Activated CD4-positive, alpha-beta T cell treated with anti-CD3 and anti-CD28 coated beads for 36 hours (primary cell): ENCODE measurements at regions of chr12 and their contacts with region 1.

Region 1: GRCh38 chr12:9634177-9634803 is 26.6 kb upstream of the KLRB1 start:
- DNase-seq: peak; percentile 88
- ATAC-seq: peak; percentile 85
- H3K4me3 Mint-ChIP-seq: no peak overlapping the region
- H3K27ac Mint-ChIP-seq: peak overlapping the region; percentile 82
- H3K4me1 Mint-ChIP-seq: peaks cover 43% of the 10 kb centered on the region
- H3K27me3 Mint-ChIP-seq: no peaks in the 10 kb centered on the region

Region 2: GRCh38 chr12:9331218-9331626 is 303.1 kb before region 1 on chr12:
- CTCF ChIA-PET with region 1: interaction called, 4 read pairs
- POLR2A ChIA-PET with region 1: no interaction called
- intact Hi-C with region 1: loop called (anchors 1 to 5 kb)
- DNase-seq: peak; percentile 83
- ATAC-seq: peak; percentile 84
- H3K4me3 Mint-ChIP-seq: no peak overlapping the region
- H3K27ac Mint-ChIP-seq: no peak overlapping the region
- H3K4me1 Mint-ChIP-seq: peaks cover 19% of the 10 kb centered on the region
- H3K27me3 Mint-ChIP-seq: no peaks in the 10 kb centered on the region

Region 3: DNA sequence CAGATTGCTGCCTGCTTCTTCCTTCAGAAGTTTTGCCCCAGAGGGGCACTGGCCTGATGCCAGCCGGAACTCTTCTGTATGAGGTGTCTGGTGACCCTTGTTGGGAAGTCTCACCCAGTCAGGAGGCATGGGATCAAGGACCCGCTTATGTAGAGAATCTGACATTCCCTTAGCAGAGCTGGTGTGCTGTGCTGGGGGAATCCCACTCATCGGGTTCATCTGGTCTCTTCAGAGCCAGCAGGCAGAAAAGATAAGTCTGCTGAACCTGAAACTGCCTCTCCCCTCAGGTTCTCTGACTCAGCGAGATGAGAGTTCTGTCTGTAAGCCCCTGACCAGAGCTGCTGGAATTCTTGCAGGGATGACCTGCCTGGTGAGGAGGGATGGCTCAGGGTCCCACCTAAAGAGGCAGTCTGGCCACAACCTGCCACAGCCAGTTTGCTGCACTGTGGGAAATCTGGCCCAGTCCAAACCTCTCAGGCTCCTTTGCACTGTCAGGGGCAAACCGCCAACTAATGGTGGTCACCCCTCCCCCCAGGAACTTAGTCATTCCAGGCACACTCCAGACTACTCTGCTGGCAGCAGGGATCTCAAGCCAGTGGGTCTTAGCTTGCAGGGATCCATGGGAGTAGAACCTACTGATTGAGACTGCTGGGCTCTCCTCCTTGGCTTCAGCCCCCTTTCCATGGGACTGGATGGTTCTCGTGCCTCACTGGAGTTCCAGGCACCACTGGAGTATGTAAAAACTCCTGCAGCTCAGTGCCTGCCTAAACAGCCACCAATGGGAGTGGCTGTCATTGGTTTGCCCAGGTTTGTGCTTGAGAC is 39.3 kb after region 1 on chr12:
- CTCF ChIA-PET with region 1: interaction called, 12 read pairs
- POLR2A ChIA-PET with region 1: interaction called, 6 read pairs
- intact Hi-C with region 1: loop called in 1 of 2 experiments (anchors 5 kb)
- DNase-seq: peak; percentile 89
- ATAC-seq: peak; percentile 47
- H3K4me3 Mint-ChIP-seq: peak overlapping the region; percentile 93
- H3K27ac Mint-ChIP-seq: peak overlapping the region; percentile 99
- H3K4me1 Mint-ChIP-seq: peaks cover 47% of the 10 kb centered on the region
- H3K27me3 Mint-ChIP-seq: no peaks in the 10 kb centered on the region

Region 4: DNA sequence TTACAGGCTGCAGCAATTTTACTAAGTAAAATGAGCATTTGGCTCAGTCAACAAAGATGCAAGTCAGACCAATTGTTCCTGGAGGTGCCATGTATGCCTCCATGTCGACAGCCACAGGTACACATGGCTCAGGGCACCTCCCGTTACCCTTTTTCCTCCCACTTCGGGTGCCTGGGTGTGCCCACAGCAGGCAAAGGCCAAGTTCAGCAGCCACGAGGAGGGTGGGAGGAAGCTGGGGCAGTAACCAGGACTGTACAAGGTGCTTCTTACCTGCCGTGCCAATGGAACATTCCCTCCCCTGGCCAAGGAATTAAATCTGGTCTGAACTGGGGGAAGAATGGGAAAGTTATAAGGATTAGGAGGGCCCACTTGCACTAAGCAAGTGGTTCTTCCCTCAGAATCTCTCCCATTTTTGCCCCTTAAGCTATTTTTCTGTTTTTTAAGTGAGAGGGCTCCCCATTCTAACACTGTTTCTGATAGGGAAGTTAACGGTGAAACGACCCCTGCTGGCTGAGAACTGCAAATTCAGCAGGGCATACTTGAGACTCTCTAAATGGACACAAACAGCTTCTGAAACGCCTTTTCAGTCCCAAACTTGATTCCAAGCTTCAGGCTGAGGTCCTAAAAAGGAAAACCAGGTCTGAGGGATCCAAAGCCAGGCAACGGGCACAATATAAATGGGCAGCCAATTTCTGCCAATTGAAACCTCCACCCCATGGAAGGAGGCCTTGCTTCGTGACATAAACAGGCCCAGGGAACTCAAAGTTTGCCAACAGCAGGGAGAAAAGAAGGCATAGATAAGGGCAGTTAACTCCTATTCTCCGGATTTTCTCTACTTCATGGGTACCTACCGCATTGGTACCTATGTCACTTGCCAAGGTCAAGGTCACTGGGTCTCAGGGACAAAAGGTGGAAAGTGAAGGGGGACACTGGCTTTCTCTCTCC is 73.8 kb after region 1 on chr12:
- CTCF ChIA-PET with region 1: interaction called, 53 read pairs
- POLR2A ChIA-PET with region 1: no interaction called
- intact Hi-C with region 1: loop called (anchors 1 kb)
- DNase-seq: peak; percentile 82
- ATAC-seq: peak; percentile 85
- H3K4me3 Mint-ChIP-seq: peak overlapping the region; percentile 60
- H3K27ac Mint-ChIP-seq: peak overlapping the region; percentile 94
- H3K4me1 Mint-ChIP-seq: peaks cover 50% of the 10 kb centered on the region
- H3K27me3 Mint-ChIP-seq: no peaks in the 10 kb centered on the region

Region 5: GRCh38 chr12:10140001-10140400 is 505.7 kb after region 1 on chr12:
- CTCF ChIA-PET with region 1: no interaction called
- POLR2A ChIA-PET with region 1: no interaction called
- intact Hi-C with region 1: loop called in 1 of 2 experiments (anchors 10 kb)
- DNase-seq: peak; percentile 66
- ATAC-seq: no peak
- H3K4me3 Mint-ChIP-seq: no peak overlapping the region
- H3K27ac Mint-ChIP-seq: no peak overlapping the region
- H3K4me1 Mint-ChIP-seq: peaks cover 2% of the 10 kb centered on the region
- H3K27me3 Mint-ChIP-seq: peaks cover 2% of the 10 kb centered on the region